Activated CD4-positive, alpha-beta T cell treated with anti-CD3 and anti-CD28 coated beads for 36 hours (primary cell): ENCODE measurements at regions of chr3 and their contacts with region 1.

Region 1: GRCh38 chr3:184185461-184186308 is at the start of gene ABCF3:
- DNase-seq: peak; percentile 100
- ATAC-seq: peak; percentile 95
- H3K4me3 Mint-ChIP-seq: peak within 1 kb of the TSS; percentile 99
- H3K27ac Mint-ChIP-seq: peak within 1 kb of the TSS; percentile 93
- H3K4me1 Mint-ChIP-seq: peaks cover 32% of the 10 kb centered on the region
- H3K27me3 Mint-ChIP-seq: no peaks in the 10 kb centered on the region
- total RNA-seq, gene ABCF3: 58.2 to 66.2 TPM

Region 2: DNA sequence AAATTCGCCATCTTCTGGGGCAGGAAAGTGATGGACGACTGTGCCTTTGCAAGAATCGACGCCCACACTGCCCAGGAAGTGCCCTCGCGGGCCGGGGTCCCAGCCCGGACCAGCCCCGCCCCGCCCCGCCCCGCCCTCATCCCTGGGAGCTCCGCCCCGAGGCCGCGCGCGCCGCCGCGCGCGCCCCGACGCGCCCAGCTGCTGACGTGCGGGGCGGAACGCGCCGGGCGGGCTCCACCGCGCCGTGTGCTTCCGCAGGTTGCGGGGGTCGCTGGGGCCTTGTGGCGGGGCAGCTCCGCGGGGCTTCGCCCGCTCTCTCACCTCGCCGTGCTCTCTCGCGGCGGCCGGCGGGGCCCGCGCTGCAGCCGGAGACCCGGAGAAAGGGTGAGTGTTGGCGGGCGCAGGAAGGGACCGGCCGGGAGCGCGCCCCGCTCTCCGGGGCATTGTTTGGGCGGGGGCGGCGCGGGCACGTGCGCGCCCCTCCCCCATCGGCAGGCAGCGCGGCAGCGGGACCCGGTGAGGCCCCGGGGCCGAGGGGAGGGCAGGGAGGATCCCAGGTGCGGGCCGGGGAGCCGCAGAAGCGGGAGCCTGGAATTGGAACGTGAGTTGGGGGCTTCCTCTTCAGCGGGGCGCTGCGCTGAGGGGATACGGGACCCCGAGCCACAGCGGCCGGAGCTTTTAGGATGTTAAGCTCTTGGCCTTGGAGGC is 487.9 kb before region 1 on chr3 and contains the start of gene YEATS2:
- CTCF ChIA-PET with region 1: no interaction called
- POLR2A ChIA-PET with region 1: no interaction called
- intact Hi-C with region 1: loop called in 1 of 2 experiments (anchors 10 kb)
- DNase-seq: peak; percentile 91
- ATAC-seq: peak; percentile 81
- H3K4me3 Mint-ChIP-seq: peak within 1 kb of the TSS; percentile 91
- H3K27ac Mint-ChIP-seq: peak within 1 kb of the TSS; percentile 89
- H3K4me1 Mint-ChIP-seq: peaks cover 31% of the 10 kb centered on the region
- H3K27me3 Mint-ChIP-seq: no peaks in the 10 kb centered on the region
- total RNA-seq, gene YEATS2: 59.4 to 73.9 TPM

Region 3: DNA sequence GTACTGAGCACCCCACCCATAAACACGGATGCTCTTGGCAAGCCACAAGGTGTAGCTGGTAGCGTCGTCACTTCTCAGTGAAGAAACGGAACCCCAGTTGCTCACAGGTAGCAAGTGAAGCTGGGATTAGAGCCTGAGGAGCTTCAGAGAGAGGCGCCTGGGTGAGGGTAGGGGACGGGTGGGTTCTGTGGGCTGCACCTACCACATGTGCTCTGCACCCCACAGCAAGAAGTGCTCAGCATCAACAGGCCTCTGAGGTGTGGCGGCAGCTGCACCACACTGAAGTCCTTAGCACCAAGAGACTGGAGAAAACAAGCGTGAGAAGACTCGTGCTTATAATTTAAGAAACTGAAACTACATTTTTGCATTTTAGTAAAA is 370.1 kb before region 1 on chr3:
- CTCF ChIA-PET with region 1: no interaction called
- POLR2A ChIA-PET with region 1: no interaction called
- intact Hi-C with region 1: no loop called
- DNase-seq: no peak
- ATAC-seq: peak; percentile 45
- H3K4me3 Mint-ChIP-seq: no peak overlapping the region
- H3K27ac Mint-ChIP-seq: no peak overlapping the region
- H3K4me1 Mint-ChIP-seq: peaks cover 10% of the 10 kb centered on the region
- H3K27me3 Mint-ChIP-seq: no peaks in the 10 kb centered on the region

Region 4: DNA sequence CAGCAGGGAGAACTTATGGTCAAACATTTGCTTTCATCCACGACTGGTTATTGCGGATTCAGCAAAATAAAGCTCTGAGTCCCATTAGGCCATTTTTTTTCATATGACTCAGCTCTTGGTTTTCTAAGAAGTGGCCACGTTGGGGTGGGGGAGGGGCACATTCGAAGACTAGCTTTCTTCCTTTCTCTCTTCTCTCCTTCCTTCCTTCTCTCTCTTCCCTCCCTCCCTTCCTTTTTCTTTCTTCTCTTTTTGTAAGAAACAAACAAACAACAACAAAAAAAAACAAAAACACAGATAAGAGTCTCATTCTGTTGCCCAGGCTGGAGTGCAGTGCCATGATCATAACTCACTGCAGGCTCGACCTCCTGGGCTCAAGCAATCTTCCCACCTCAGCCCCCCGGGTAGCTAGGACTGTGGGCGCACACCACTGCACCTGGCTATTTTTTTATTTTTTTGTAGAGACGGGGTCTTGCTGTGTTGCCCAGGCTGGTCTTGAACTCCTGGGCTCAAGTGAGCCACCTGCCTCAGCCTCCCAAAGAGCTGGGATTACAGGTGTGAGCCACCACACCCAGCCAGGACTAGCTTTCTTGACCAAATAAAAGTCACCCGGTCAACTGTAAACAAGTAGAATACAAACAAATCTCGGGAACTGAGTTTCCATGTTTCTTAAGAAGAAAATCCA is 209.6 kb before region 1 on chr3:
- CTCF ChIA-PET with region 1: no interaction called
- POLR2A ChIA-PET with region 1: no interaction called
- intact Hi-C with region 1: no loop called
- DNase-seq: no peak
- ATAC-seq: no peak
- H3K4me3 Mint-ChIP-seq: no peak overlapping the region
- H3K27ac Mint-ChIP-seq: no peak overlapping the region
- H3K4me1 Mint-ChIP-seq: peaks cover 2% of the 10 kb centered on the region
- H3K27me3 Mint-ChIP-seq: no peaks in the 10 kb centered on the region

Region 5: DNA sequence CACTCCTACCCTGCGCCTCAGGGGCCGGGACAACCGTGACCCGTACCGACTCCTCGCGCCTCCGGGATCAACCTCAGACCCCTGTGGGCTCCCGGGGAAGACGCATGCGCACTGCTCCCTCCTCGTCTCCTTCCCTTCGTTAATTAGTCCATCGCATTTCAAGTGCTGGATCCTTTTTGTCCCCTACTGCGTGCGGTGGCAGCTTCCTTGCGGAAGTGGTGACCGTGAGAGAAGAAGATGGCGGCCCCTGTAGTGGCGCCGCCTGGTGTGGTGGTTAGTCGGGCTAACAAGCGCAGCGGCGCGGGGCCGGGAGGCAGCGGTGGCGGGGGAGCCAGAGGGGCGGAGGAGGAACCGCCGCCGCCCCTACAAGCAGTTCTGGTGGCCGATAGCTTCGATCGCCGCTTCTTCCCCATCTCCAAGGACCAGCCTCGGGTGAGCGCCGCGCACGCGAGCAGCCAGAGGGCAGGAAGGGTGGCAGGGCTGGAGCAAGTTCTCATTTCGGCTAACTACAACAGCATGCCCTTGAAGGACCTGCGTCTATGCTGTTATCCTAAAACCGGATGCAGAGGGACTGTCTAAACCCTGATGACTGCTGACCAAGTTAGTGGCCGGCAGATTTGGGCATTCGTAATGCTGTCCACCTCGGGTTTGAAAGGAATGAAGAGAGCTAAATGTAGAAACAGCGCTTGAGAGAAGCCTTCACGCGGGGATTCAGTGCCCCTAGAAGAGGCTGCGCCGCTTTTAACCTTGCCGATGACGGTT is 50.4 kb before region 1 on chr3 and contains the start of gene EIF2B5:
- CTCF ChIA-PET with region 1: interaction called, 4 read pairs
- POLR2A ChIA-PET with region 1: no interaction called
- intact Hi-C with region 1: loop called (anchors 1 kb)
- DNase-seq: peak; percentile 93
- ATAC-seq: peak; percentile 90
- H3K4me3 Mint-ChIP-seq: peak within 1 kb of the TSS; percentile 97
- H3K27ac Mint-ChIP-seq: peak within 1 kb of the TSS; percentile 92
- H3K4me1 Mint-ChIP-seq: peaks cover 29% of the 10 kb centered on the region
- H3K27me3 Mint-ChIP-seq: no peaks in the 10 kb centered on the region
- total RNA-seq, gene EIF2B5: 46.4 to 60.6 TPM

Region 6: DNA sequence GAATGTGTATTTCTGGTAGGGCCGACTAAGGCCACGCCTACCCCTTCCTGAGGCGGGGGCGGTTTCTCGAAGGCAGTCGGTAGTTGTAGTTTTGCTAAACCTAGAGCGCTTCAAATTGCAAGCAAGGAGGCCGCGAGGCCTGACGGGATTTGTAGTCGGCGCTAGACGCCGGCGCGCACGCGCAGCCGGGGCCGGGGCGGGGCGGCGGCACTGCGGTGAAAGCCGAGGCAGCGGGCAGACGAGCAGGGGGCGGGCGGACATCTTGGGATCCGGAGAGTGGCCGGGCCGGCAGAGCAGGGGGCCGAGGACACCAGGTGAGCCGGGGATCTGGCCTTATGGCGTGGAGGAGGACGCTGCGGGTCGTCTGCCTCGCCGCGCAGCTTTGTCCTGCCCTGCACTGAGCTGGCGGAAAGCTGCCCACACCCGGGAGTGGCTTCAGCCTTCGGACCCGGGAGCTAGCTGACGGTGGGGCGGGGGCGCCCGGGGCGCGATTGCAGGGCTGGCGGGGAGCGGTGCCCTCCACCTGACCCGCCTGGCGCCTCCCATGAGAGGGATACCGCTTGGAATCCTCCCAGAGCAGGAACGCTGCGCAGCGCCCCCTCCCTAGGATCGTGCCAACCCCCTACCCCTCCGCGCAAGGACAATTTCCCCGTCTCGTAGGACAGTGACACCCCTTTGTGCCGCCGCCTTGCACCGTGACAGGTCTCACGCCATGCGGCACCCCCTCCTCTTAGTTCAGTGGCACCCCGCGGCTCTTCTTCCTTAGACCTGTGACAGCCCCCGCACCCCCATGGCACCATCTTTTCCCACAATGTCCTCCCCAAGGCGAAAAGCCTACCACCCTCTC is 10.8 kb before region 1 on chr3 and contains the start of gene AP2M1:
- CTCF ChIA-PET with region 1: no interaction called
- POLR2A ChIA-PET with region 1: interaction called, 3 read pairs
- intact Hi-C with region 1: loop called (anchors 1 kb)
- DNase-seq: peak; percentile 98
- ATAC-seq: peak; percentile 97
- H3K4me3 Mint-ChIP-seq: peak within 1 kb of the TSS; percentile 95
- H3K27ac Mint-ChIP-seq: peak within 1 kb of the TSS; percentile 89
- H3K4me1 Mint-ChIP-seq: peaks cover 23% of the 10 kb centered on the region
- H3K27me3 Mint-ChIP-seq: no peaks in the 10 kb centered on the region
- total RNA-seq, gene AP2M1: 192 to 204 TPM

Region 7: DNA sequence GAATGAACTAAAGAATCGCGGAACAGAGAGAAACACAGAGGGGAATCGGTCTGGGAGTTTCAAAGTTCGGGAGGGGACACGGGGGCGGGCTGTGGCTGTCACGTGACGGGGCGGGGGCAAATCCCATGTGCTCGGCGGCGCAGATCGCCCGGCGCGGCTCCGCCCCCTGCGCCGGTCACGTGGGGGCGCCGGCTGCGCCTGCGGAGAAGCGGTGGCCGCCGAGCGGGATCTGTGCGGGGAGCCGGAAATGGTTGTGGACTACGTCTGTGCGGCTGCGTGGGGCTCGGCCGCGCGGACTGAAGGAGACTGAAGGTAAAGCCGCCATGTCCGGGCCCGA is 128.6 kb after region 1 on chr3 and contains the start of gene EIF4G1:
- CTCF ChIA-PET with region 1: interaction called, 3 read pairs
- POLR2A ChIA-PET with region 1: no interaction called
- intact Hi-C with region 1: loop called in 1 of 2 experiments (anchors 1 kb)
- DNase-seq: peak; percentile 96
- ATAC-seq: peak; percentile 89
- H3K4me3 Mint-ChIP-seq: peak within 1 kb of the TSS; percentile 84
- H3K27ac Mint-ChIP-seq: peak within 1 kb of the TSS; percentile 90
- H3K4me1 Mint-ChIP-seq: peaks cover 29% of the 10 kb centered on the region
- H3K27me3 Mint-ChIP-seq: no peaks in the 10 kb centered on the region
- total RNA-seq, gene EIF4G1: 479 to 556 TPM